ENCODE measurements at regions of chr7 and their contacts with region 1.

Region 1: DNA sequence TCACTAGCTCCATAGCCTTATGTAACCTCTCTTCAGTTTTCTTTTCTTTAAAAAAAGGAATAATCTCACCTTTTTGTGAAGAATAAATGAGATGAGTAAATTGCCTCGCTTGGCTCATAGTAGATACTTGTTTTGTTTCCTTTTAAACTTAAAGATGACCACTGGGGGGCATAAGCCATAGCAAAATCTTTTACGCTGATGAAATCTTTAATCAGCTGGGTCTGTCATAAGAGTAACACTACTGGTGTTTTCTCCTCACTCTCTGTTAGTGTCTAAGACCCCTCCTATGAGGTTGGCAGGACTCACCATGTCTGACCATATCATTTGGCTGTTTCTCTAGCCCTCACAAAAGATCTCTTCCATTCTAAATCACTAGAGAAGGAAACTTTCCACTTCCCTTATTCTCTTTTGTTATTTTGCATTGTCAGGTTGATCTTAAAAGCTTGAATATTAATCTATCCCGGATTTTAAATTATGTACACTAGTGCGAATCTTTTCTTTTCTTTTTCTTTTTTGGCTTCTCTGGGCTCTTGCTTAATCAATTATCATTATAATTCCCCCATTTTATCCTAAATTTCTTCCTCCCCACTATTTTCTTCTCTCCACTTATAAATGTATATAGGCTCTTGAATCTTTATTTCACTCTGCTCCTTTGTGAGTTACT is 12.5 kb downstream of the STAG3 start:
- DNase-seq: peak in 2 of 5 donors; percentile 49 to 59
- H3K4me3 ChIP-seq: no peak overlapping the region
- H3K4me3 Mint-ChIP-seq: no peak overlapping the region
- H3K27ac ChIP-seq: no peak overlapping the region
- H3K27ac Mint-ChIP-seq: peak overlapping the region in 6 of 8 donors; percentile 5 to 60 (median 50)
- H3K4me1 ChIP-seq: peaks cover 15% of the 10 kb centered on the region
- H3K4me1 Mint-ChIP-seq: peaks cover 2 to 10% (median 7%) of the 10 kb centered on the region in 3 donors
- H3K27me3 ChIP-seq: no peaks in the 10 kb centered on the region
- H3K27me3 Mint-ChIP-seq: no peaks in the 10 kb centered on the region

Region 2: DNA sequence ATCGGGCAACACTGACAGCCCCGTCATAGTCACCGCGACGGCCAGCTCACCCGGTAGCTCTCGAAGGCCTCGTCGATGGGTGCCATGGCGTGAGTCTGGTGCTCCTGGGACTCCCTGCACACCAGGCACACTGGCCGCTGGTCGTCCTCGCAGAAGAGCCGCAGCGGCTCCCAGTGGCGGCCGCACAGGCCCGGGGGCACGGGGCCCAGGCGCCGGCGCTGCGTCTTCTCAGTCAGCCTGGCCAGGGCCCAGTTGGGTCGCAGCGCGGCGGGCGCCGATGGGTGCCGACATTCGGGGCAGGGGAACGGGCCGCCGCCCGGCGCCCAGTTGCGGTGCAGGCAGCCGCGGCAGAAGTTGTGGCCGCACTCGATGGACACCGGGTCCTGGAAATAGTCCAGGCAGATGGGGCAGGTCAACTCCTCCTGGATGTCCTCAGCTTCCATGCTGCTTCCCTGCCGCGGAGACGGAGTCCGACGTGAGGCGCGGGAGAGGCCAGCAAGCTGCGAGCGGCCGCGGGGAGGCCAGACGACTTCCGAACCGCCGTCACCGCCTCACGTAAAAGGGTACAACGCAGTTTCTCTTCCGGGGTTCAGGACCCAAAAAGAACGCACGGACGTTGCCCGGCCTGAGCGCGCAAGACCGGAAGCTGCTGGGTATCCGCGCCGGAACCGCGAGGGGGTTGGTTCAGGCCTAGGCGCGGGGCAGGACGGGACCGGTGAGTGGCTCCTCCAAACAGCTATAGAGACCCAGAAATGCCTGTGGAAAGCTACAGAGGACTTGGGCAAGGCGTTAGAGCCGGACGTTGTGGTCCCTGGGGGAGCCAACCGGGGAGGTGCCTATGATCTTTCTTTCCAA is 271.0 kb before region 1 on chr7 and contains the start of gene TRIM4:
- CTCF ChIA-PET with region 1: no interaction called
- POLR2A ChIA-PET with region 1: no interaction called
- DNase-seq: peak; percentile 78 to 92 (median 88)
- H3K4me3 ChIP-seq: peak within 1 kb of the TSS; percentile 97
- H3K4me3 Mint-ChIP-seq: peak within 1 kb of the TSS; percentile 92 to 98 (median 96)
- H3K27ac ChIP-seq: peak within 1 kb of the TSS; percentile 94
- H3K27ac Mint-ChIP-seq: peak within 1 kb of the TSS; percentile 93 to 99 (median 98)
- H3K4me1 ChIP-seq: peaks cover 48% of the 10 kb centered on the region
- H3K4me1 Mint-ChIP-seq: peaks cover 47 to 59% (median 57%) of the 10 kb centered on the region in 3 donors
- H3K27me3 ChIP-seq: no peaks in the 10 kb centered on the region
- H3K27me3 Mint-ChIP-seq: peaks cover 0 to 6% of the 10 kb centered on the region in 2 donors
- total RNA-seq, gene TRIM4: 30.0 to 31.0 TPM

Region 3: DNA sequence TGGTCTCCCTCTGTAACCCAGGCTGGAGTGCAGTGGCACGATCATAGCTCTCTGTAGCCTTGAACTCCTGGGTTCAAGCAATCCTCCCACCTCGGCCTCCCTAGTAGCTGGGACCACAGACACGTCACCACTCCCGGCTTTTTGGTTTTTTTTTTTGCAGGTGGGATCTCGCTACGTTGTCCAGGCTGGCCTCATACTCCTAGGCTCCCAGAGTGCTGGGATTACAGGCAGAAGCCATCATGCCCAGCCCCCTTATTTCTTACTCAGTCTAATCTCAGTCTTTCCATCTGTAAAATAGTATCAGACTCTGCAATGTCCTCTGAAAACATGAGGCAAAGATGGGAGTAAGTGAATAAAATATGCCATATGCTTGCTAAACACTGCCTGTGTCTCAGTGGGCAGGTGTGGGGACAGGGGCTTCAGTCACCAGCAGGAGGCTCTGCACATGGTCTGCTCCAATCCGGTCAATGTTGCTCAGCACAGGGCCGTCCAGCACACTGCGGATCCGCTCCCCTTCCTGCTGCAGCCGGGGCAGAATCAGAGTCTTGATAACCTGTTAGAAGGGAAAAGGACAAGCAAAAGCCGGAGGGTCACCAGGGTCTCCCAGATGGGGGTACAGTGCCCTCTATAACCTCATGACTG is 80.5 kb before region 1 on chr7:
- CTCF ChIA-PET with region 1: no interaction called
- POLR2A ChIA-PET with region 1: no interaction called
- DNase-seq: no peak
- H3K4me3 ChIP-seq: no peak overlapping the region
- H3K4me3 Mint-ChIP-seq: no peak overlapping the region
- H3K27ac ChIP-seq: no peak overlapping the region
- H3K27ac Mint-ChIP-seq: peak overlapping the region in 1 of 8 donors; percentile 65
- H3K4me1 ChIP-seq: no peaks in the 10 kb centered on the region
- H3K4me1 Mint-ChIP-seq: no peaks in the 10 kb centered on the region
- H3K27me3 ChIP-seq: no peaks in the 10 kb centered on the region
- H3K27me3 Mint-ChIP-seq: no peaks in the 10 kb centered on the region

Region 4: GRCh38 chr7:100208911-100209408 is 18.8 kb after region 1 on chr7:
- CTCF ChIA-PET with region 1: interaction called, 13 read pairs
- POLR2A ChIA-PET with region 1: no interaction called
- DNase-seq: no peak
- H3K4me3 ChIP-seq: peak overlapping the region; percentile 39
- H3K4me3 Mint-ChIP-seq: peak overlapping the region; percentile 37 to 80 (median 58)
- H3K27ac ChIP-seq: no peak overlapping the region
- H3K27ac Mint-ChIP-seq: peak overlapping the region in 7 of 8 donors; percentile 16 to 89 (median 81)
- H3K4me1 ChIP-seq: peaks cover 43% of the 10 kb centered on the region
- H3K4me1 Mint-ChIP-seq: peaks cover 41 to 45% (median 45%) of the 10 kb centered on the region in 3 donors
- H3K27me3 ChIP-seq: no peaks in the 10 kb centered on the region
- H3K27me3 Mint-ChIP-seq: peaks cover 0 to 1% of the 10 kb centered on the region in 2 donors

Region 5: DNA sequence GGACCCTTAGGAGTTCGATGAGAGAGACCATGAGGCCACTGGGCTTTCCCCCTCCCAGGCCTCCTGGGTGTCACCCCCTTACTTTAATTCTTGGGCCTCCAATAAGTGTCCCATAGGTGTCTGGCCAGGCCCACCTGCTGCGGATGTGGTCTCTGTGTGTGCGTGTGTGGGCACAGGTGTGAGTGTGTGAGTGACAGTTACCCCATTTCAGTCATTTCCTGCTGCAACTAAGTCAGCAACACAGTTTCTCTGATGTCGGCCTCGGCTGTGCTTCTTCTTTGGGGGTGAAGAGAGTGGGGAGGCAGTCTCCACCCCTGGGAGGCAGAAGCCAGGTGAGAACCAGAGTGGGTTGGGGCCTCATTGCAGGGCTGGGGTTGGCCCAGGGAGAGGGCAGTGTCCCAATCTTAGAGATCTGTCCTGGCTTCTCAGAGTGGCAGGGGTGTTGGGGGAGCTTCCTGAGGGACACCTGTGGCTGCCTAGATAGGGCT is 31.1 kb after region 1 on chr7:
- CTCF ChIA-PET with region 1: interaction called, 23 read pairs
- POLR2A ChIA-PET with region 1: no interaction called
- DNase-seq: peak; percentile 69 to 93 (median 89)
- H3K4me3 ChIP-seq: peak overlapping the region; percentile 95
- H3K4me3 Mint-ChIP-seq: peak overlapping the region; percentile 89 to 98 (median 95)
- H3K27ac ChIP-seq: peak overlapping the region; percentile 89
- H3K27ac Mint-ChIP-seq: peak overlapping the region; percentile 94 to 100 (median 99)
- H3K4me1 ChIP-seq: peaks cover 52% of the 10 kb centered on the region
- H3K4me1 Mint-ChIP-seq: peaks cover 59 to 77% (median 66%) of the 10 kb centered on the region in 3 donors
- H3K27me3 ChIP-seq: no peaks in the 10 kb centered on the region
- H3K27me3 Mint-ChIP-seq: peaks cover 0 to 7% of the 10 kb centered on the region in 2 donors

Measured in CD8-positive, alpha-beta memory T cell (primary cell).